Upper lobe of right lung (tissue), 1 donor: ENCODE measurements at regions of chr20 and their contacts with region 1.

Region 1: DNA sequence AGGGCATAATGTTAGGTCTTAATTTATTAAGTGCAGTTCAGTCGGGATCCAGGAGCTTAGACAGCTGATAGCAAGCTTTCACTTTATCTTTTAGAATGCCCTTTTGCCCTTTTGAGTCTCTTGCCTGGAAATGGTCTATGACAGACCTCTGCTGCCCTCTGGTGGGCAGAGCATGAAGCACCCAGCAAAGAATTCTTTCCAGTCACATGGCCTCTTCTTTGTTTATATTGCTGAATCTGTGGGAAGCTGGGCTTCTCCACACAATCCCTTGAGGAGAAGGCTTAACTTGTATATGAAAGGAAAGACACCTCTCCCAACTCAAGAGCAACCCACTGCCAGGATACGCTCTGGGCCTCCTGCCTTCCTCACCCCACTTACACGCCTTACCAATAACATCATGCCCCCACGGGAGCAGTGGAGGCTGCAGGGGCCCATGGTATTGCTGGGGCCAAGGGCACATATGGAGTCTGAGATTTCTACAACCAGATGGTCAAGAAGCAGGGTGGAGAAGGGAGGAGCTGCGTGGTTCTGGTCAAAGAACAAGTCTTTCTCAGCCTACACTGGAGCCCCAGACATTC is 20.4 kb downstream of the WFDC3 start:
- DNase-seq: peak; percentile 86
- ATAC-seq: peak; percentile 96
- H3K4me3 ChIP-seq: no peak overlapping the region
- H3K27ac ChIP-seq: peak overlapping the region; percentile 11
- H3K4me1 ChIP-seq: peaks cover 9% of the 10 kb centered on the region
- H3K27me3 ChIP-seq: no peaks in the 10 kb centered on the region
- CTCF ChIP-seq: peak; percentile 97

Region 2: GRCh38 chr20:45322952-45323383 is 448.3 kb before region 1 on chr20:
- intact Hi-C with region 1: no loop called
- DNase-seq: peak; percentile 73
- ATAC-seq: peak; percentile 83
- H3K4me3 ChIP-seq: no peak overlapping the region
- H3K27ac ChIP-seq: no peak overlapping the region
- H3K4me1 ChIP-seq: no peaks in the 10 kb centered on the region
- H3K27me3 ChIP-seq: no peaks in the 10 kb centered on the region
- CTCF ChIP-seq: peak; percentile 32

Region 3: DNA sequence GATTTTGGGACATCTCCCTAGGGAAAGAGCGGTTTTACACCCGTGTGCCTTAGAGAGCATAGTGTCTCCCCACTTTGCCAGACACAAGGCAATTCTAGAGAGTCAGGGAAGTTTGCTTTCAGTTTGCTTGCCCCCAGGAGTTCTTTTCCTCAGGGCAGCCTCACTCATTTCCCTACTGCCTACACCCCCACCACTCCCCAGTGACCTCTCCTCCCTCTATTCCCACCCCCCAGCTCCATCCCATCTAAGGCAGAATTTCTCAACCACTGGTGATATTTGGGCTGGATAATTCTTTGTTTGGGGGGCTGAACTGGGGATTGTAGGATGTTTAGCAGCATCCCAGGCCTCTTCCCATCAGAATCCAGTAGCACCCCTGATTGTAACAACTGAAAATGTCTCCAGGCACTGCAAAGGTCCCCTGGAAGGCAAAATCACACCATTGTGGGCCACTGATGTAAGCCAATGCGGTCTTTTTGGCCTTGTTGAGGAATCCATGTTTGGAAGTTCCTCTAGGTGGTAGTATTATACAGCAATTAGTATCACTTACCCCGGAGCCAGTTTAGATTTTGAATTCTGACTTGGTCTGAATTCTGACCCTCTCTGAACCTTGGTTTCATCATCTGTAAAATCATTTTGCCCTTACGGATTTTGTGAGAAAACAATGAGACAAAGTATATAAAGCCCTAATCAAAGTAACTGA is 225.4 kb before region 1 on chr20:
- intact Hi-C with region 1: loop called (anchors 10 kb)
- DNase-seq: no peak
- ATAC-seq: peak; percentile 81
- H3K4me3 ChIP-seq: no peak overlapping the region
- H3K27ac ChIP-seq: no peak overlapping the region
- H3K4me1 ChIP-seq: no peaks in the 10 kb centered on the region
- H3K27me3 ChIP-seq: no peaks in the 10 kb centered on the region
- CTCF ChIP-seq: peak; percentile 39